B cell (primary cell): ENCODE measurements at regions of chr5 and their contacts with region 1.

Region 1: DNA sequence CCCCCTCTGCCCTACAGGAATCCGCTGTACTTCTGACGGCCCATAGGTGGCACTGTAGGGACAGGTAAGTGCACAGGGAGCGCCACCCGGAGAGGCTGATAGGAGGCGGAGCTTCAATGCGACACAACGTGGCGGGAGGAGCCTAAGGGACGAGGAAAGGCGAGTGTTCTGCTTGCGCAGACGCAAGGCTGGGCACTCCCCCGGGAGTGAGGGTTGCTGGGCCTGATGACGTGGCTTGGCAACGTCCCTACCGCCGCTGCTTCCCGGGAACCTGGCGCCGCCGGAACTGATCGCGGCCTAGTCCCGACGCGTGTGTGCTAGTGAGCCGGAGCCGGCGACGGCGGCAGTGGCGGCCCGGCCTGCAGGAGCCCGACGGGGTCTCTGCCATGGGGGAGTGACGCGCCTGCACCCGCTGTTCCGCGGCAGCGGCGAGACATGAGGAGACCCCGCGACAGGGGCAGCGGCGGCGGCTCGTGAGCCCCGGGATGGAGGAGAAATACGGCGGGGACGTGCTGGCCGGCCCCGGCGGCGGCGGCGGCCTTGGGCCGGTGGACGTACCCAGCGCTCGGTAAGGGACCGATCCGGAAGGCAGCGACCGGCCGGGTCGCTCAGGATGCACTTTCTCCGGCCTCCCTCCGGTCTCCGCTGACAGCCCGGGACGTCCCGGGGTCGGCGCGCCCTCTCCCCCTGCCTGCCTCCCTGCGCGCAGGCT is at the start of gene SLC30A5:
- DNase-seq: peak; percentile 99
- ATAC-seq: peak; percentile 99
- H3K4me3 ChIP-seq: peak within 1 kb of the TSS; percentile 83 to 90 (median 86)
- H3K4me3 Mint-ChIP-seq: peak within 1 kb of the TSS; percentile 87
- H3K27ac ChIP-seq: peak within 1 kb of the TSS; percentile 73 to 99
- H3K27ac Mint-ChIP-seq: peak within 1 kb of the TSS; percentile 86
- H3K4me1 ChIP-seq: peaks cover 11 to 14% of the 10 kb centered on the region in 2 donors
- H3K4me1 Mint-ChIP-seq: peaks cover 31% of the 10 kb centered on the region
- H3K27me3 ChIP-seq: no peaks in the 10 kb centered on the region
- H3K27me3 Mint-ChIP-seq: no peaks in the 10 kb centered on the region
- CTCF ChIP-seq: peak; percentile 80
- total RNA-seq, gene SLC30A5: 35.3 and 35.8 TPM in 2 replicates

Region 2: GRCh38 chr5:69007726-69008368 is 86.1 kb before region 1 on chr5:
- CTCF ChIA-PET with region 1: no interaction called
- POLR2A ChIA-PET with region 1: no interaction called
- intact Hi-C with region 1: no loop called
- DNase-seq: peak; percentile 76
- ATAC-seq: peak; percentile 77
- H3K4me3 ChIP-seq: no peak overlapping the region
- H3K4me3 Mint-ChIP-seq: no peak overlapping the region
- H3K27ac ChIP-seq: no peak overlapping the region
- H3K27ac Mint-ChIP-seq: no peak overlapping the region
- H3K4me1 ChIP-seq: no peaks in the 10 kb centered on the region
- H3K4me1 Mint-ChIP-seq: no peaks in the 10 kb centered on the region
- H3K27me3 ChIP-seq: peaks cover 0 to 8% (median 1%) of the 10 kb centered on the region in 4 experiments
- H3K27me3 Mint-ChIP-seq: peaks cover 40% of the 10 kb centered on the region
- CTCF ChIP-seq: peak; percentile 80

Region 3: GRCh38 chr5:69042915-69043658 is 50.8 kb before region 1 on chr5:
- CTCF ChIA-PET with region 1: interaction called, 10 read pairs
- POLR2A ChIA-PET with region 1: no interaction called
- intact Hi-C with region 1: loop called (anchors 1 kb)
- DNase-seq: peak; percentile 93
- ATAC-seq: peak; percentile 95
- H3K4me3 ChIP-seq: peak overlapping the region; percentile 43 to 81 (median 63)
- H3K4me3 Mint-ChIP-seq: peak overlapping the region; percentile 90
- H3K27ac ChIP-seq: peak overlapping the region; percentile 51 to 82
- H3K27ac Mint-ChIP-seq: peak overlapping the region; percentile 91
- H3K4me1 ChIP-seq: peaks cover 0 to 4% of the 10 kb centered on the region in 2 donors
- H3K4me1 Mint-ChIP-seq: peaks cover 6% of the 10 kb centered on the region
- H3K27me3 ChIP-seq: no peaks in the 10 kb centered on the region
- H3K27me3 Mint-ChIP-seq: no peaks in the 10 kb centered on the region
- CTCF ChIP-seq: peak; percentile 90

Region 4: DNA sequence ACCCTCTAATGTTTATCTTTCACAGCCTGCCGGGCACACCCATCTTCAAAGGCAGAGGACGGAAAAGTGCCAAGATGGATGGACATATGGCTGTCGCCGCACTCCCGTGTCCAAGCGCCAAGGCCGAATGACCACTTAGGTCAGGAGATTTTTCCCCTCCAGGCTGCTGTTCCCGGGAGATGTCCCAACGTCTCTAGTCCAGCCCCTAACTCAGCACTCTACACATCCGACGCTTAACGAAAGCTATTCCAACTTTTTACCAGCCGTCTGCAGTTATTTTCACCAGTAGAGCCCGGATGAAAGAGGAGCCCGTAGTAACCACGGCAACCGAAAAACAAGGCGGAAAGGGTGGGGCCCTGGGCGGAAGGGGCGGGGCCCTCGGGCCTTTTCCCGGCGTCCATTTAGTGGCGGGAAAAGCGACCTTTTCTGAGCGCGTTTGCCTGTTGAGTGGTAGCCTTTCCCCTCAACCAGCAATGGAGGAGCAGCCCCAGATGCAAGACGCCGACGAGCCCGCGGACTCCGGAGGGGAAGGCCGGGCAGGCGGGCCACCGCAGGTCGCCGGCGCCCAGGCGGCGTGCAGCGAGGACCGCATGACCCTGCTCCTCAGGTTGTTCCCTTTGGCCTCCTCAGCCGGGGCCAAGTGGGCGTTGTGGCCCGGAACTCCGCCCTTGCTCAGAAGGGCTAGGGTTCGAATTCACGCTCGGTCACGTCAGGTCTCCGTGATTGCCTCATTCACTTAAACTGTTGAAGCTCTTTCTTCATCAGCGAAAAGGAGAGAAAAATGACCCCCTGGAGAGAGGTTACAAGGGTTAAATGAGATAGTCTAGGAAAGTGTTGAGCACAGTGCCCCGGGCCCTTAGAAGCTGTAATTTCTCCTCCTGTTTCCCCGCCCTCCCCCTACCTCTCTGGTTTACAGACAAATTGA is 95.5 kb after region 1 on chr5 and contains the start of gene CENPH:
- CTCF ChIA-PET with region 1: interaction called, 9 read pairs
- POLR2A ChIA-PET with region 1: no interaction called
- intact Hi-C with region 1: loop called (anchors 1 kb)
- DNase-seq: peak; percentile 91
- ATAC-seq: peak; percentile 92
- H3K4me3 ChIP-seq: peak within 1 kb of the TSS; percentile 64 to 96 (median 80)
- H3K4me3 Mint-ChIP-seq: peak within 1 kb of the TSS; percentile 95
- H3K27ac ChIP-seq: peak within 1 kb of the TSS; percentile 30 to 88
- H3K27ac Mint-ChIP-seq: peak within 1 kb of the TSS; percentile 93
- H3K4me1 ChIP-seq: peaks cover 9 to 14% of the 10 kb centered on the region in 2 donors
- H3K4me1 Mint-ChIP-seq: peaks cover 17% of the 10 kb centered on the region
- H3K27me3 ChIP-seq: no peaks in the 10 kb centered on the region
- H3K27me3 Mint-ChIP-seq: no peaks in the 10 kb centered on the region
- CTCF ChIP-seq: no peak
- total RNA-seq, gene CENPH: 11.9 and 12.0 TPM in 2 replicates

Region 5: DNA sequence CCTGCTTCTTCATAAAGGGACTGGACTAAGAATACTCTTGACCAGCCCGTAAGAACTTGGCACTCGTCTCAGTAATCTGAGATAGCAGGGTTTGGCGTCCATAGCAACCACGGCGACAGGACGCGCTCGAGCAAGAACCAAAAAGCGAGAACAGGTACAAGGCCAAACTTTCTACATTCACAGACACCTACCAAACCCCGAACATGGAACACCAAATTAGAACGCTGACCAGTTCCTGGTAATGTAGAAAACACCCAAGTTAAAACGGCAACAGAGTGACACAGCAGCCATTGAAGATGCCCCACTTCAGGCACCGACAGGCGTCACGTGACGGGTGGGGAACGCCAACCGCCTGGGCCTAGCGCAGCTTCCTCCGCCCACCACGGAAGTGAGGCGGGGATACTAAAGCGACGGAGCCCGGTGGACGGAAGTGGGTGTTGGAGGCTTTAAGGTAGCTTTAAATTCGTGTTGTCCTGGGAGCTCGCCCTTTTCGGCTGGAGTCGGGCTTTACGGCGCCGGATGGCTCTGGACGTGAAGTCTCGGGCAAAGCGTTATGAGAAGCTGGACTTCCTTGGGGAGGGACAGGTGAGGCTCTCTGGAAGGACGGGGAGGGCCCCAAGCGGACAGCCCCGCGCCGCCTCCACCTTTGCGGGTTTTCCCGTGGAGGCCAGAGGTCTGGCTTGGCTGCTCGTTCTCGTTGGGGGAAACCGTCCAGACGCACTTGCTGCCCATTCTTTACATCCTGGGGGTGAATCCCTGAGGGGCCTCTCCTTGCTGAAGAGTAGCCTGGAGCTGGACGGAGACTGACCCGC is 140.7 kb after region 1 on chr5 and contains the start of gene CDK7:
- CTCF ChIA-PET with region 1: interaction called, 10 read pairs
- POLR2A ChIA-PET with region 1: interaction called, 3 read pairs
- intact Hi-C with region 1: loop called (anchors 1 kb)
- DNase-seq: peak; percentile 92
- ATAC-seq: peak; percentile 99
- H3K4me3 ChIP-seq: peak within 1 kb of the TSS; percentile 77 to 99 (median 94)
- H3K4me3 Mint-ChIP-seq: peak within 1 kb of the TSS; percentile 100
- H3K27ac ChIP-seq: peak within 1 kb of the TSS; percentile 50 to 83
- H3K27ac Mint-ChIP-seq: peak within 1 kb of the TSS; percentile 93
- H3K4me1 ChIP-seq: peaks cover 6 to 21% of the 10 kb centered on the region in 2 donors
- H3K4me1 Mint-ChIP-seq: peaks cover 38% of the 10 kb centered on the region
- H3K27me3 ChIP-seq: no peaks in the 10 kb centered on the region
- H3K27me3 Mint-ChIP-seq: no peaks in the 10 kb centered on the region
- CTCF ChIP-seq: no peak
- total RNA-seq, gene CDK7: 30.6 and 36.5 TPM in 2 replicates

Region 6: GRCh38 chr5:69369369-69370121 is 275.6 kb after region 1 on chr5 and contains the starts of genes AK6, RAD17 and TAF9:
- CTCF ChIA-PET with region 1: interaction called, 14 read pairs
- POLR2A ChIA-PET with region 1: interaction called, 3 read pairs
- intact Hi-C with region 1: loop called (anchors 1 kb)
- DNase-seq: peak; percentile 99
- ATAC-seq: peak; percentile 95
- H3K4me3 ChIP-seq: peak within 1 kb of the TSS; percentile 69 to 89 (median 83)
- H3K4me3 Mint-ChIP-seq: peak within 1 kb of the TSS; percentile 96
- H3K27ac ChIP-seq: peak within 1 kb of the TSS; percentile 96 to 99
- H3K27ac Mint-ChIP-seq: peak within 1 kb of the TSS; percentile 100
- H3K4me1 ChIP-seq: peaks cover 22 to 26% of the 10 kb centered on the region in 2 donors
- H3K4me1 Mint-ChIP-seq: peaks cover 41% of the 10 kb centered on the region
- H3K27me3 ChIP-seq: no peaks in the 10 kb centered on the region
- H3K27me3 Mint-ChIP-seq: no peaks in the 10 kb centered on the region
- CTCF ChIP-seq: no peak
- total RNA-seq, gene AK6: 21.7 and 25.4 TPM in 2 replicates
- total RNA-seq, gene RAD17: 39.6 and 41.0 TPM in 2 replicates
- total RNA-seq, gene TAF9: 41.6 and 42.0 TPM in 2 replicates